Activated T-helper 1 cell treated with anti-CD3 and anti-CD28 coated beads, Interleukin-12 subunit alpha, Interleukin-12 subunit beta, Interleukin-2, Interleukin-4 antibody, amounts not matched to agents 30 ng/mL and 10 ng/mL and 1 ng/mL, durations not matched to agents 14 hours and 24 hours and 36 hours (primary cell): ENCODE measurements at regions of chr15 and their contacts with region 1.

Region 1: DNA sequence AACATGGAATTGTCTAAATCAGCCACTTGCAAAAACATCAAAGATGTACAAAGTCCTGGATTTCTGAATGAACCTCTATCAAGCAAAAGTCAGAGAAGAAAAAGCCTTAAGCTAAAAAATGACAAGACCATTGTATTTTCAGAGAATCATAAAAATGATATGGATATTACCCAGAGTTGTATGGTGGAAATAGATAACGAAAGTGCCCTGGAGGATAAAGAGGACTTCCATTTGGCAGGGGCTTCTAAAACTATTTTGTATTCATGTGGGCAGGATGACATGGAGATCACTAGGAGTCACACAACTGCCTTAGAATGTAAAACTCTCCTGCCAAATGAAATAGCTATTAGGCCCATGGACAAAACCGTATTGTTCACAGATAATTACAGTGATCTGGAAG is 29.3 kb downstream of the KNL1 start:
- DNase-seq: no peak
- H3K4me3 Mint-ChIP-seq: no peak overlapping the region
- H3K27ac Mint-ChIP-seq: no peak overlapping the region
- H3K4me1 Mint-ChIP-seq: no peaks in the 10 kb centered on the region
- H3K27me3 Mint-ChIP-seq: no peaks in the 10 kb centered on the region

Region 2: DNA sequence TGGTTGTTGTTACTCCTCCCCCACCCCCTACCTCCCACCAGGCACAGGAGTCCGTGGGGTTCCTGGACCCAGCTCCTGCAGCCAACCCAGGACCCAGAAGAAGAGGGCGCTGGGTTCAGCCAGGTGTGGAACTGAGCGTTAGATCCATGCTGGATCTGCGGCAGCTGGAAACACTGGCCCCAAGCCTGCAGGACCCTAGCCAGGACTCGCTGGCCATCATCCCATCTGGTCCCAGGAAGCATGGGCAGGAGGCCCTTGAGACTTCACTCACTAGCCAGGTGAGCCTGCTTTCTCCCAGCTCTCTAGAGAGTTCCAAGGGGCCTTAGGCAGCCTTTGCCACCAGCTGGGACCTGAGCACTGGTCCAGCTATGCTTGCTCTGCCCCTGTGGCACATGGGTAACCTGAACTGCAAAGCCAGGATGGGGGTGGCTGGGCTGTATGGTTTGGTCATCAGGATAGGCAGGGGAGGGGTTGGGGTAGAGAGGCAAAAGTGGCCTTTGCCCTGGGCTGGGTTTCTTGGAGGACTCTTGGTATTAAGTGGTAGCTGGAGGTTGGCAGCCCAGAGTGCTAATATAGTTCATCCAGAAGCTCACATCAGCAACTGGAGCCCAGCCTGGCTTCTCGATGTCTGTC is 1197.5 kb after region 1 on chr15:
- intact Hi-C with region 1: loop called (anchors 5 kb)
- DNase-seq: no peak
- H3K4me3 Mint-ChIP-seq: no peak overlapping the region
- H3K27ac Mint-ChIP-seq: no peak overlapping the region
- H3K4me1 Mint-ChIP-seq: no peaks in the 10 kb centered on the region
- H3K27me3 Mint-ChIP-seq: no peaks in the 10 kb centered on the region